Ascending aorta (tissue), 2 donors: ENCODE measurements at regions of chr9 and their contacts with region 1.

Region 1: GRCh38 chr9:113454914-113455761 is 8.4 kb upstream of the RGS3 start:
- DNase-seq: peak in 1 of 2 donors; percentile 86
- H3K4me3 ChIP-seq: peak overlapping the region in 1 of 2 donors; percentile 14
- H3K27ac ChIP-seq: peak overlapping the region; percentile 97
- H3K4me1 ChIP-seq: peaks cover 16 to 41% of the 10 kb centered on the region in 2 donors
- H3K27me3 ChIP-seq: no peaks in the 10 kb centered on the region
- CTCF ChIP-seq: no peak

Region 2: DNA sequence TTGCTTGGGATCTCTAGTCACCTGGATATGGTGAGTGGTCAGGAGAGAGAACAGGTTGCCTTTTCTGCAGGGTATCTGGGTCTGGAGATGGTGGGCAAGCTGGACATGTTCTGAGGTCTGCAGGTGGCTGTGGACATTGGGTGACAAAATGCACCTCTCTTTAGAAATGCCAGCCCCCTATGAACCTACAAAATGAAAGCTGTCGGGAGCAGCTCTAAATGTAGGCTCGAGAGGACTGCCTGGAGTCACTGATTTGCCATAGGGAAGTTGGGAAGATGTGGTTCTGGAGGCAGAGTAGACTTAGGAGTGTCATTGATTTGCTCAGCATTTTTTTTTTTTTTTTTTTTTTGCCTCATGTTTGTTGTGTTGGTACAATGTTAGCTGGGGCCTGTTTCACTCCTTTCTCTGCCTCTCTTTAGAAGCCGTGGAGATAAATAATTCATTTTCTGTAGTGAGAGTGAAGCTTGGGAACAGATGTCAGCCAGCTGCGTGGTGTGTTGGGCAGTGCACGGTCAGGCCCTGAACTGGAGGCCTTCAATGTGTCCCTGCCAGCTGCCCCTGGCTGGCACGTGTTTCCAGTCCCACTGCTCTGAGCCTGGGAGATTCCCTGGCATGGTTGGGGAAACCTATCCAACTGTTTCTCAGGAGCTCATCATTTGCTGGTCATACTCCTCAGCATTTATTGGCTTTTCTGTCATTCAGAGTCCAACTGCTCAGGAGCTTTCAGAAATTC is 13.7 kb after region 1 on chr9:
- intact Hi-C with region 1: no loop called
- DNase-seq: no peak
- H3K4me3 ChIP-seq: no peak overlapping the region
- H3K27ac ChIP-seq: peak overlapping the region; percentile 55 to 75
- H3K4me1 ChIP-seq: peaks cover 6 to 15% of the 10 kb centered on the region in 2 donors
- H3K27me3 ChIP-seq: no peaks in the 10 kb centered on the region
- CTCF ChIP-seq: no peak

Region 3: DNA sequence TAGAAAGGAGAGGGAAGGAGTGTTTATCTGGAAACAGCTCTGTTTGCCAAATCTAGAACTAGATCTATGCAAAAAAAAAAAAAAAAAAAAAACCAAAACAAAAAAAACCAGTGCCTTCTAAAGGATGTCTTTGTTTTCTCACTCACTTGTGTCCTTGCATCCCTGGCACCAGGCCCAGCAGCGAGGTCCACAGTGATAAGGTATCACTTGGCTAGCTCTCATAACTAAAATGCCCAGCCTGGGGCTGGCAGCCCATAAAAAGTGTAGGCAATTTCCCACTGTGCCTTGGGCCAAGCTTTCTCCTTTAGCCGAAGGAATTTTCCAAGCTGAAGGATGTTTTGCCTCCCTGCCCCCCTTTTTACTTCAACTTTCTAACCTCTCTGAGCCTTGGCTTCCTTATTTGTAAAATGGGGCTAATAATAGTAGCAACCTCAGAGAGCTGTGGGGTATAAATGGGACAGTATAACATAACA is 29.2 kb after region 1 on chr9:
- intact Hi-C with region 1: loop called (anchors 1 kb)
- DNase-seq: peak in 1 of 2 donors; percentile 80
- H3K4me3 ChIP-seq: no peak overlapping the region
- H3K27ac ChIP-seq: peak overlapping the region; percentile 96 to 97
- H3K4me1 ChIP-seq: peaks cover 9 to 67% of the 10 kb centered on the region in 2 donors
- H3K27me3 ChIP-seq: no peaks in the 10 kb centered on the region
- CTCF ChIP-seq: no peak

Region 4: GRCh38 chr9:113492343-113493212 is 37.4 kb after region 1 on chr9:
- intact Hi-C with region 1: loop called (anchors 2 kb)
- DNase-seq: peak in 1 of 2 donors; percentile 81
- H3K4me3 ChIP-seq: no peak overlapping the region
- H3K27ac ChIP-seq: peak overlapping the region; percentile 78 to 92
- H3K4me1 ChIP-seq: peaks cover 11 to 48% of the 10 kb centered on the region in 2 donors
- H3K27me3 ChIP-seq: no peaks in the 10 kb centered on the region
- CTCF ChIP-seq: no peak

Region 5: GRCh38 chr9:113648586-113649453 is 193.7 kb after region 1 on chr9:
- intact Hi-C with region 1: no loop called
- DNase-seq: peak in 1 of 2 donors; percentile 61
- H3K4me3 ChIP-seq: no peak overlapping the region
- H3K27ac ChIP-seq: no peak overlapping the region
- H3K4me1 ChIP-seq: peaks cover 0 to 7% of the 10 kb centered on the region in 2 donors
- H3K27me3 ChIP-seq: no peaks in the 10 kb centered on the region
- CTCF ChIP-seq: no peak